ENCODE measurements at regions of chr17 and their contacts with region 1.

Region 1: GRCh38 chr17:60077672-60078519 is 825 bp downstream of the HEATR6 start:
- DNase-seq: peak in 2 of 4 experiments; percentile 44 to 64
- ATAC-seq: peak; percentile 59
- H3K4me3 ChIP-seq: peak overlapping the region; percentile 70
- H3K27ac ChIP-seq: peak overlapping the region; percentile 79
- H3K4me1 ChIP-seq: peaks cover 0 to 25% of the 10 kb centered on the region in 2 experiments; a peak in 2 of 5 replicates
- H3K27me3 ChIP-seq: no peaks in the 10 kb centered on the region
- CTCF ChIP-seq: no peak
- EP300 ChIP-seq: peak; percentile 21; the same call in 1 of the 2 replicates
- POLR2A ChIP-seq: no peak
- RAD21 ChIP-seq: no peak

Region 2: DNA sequence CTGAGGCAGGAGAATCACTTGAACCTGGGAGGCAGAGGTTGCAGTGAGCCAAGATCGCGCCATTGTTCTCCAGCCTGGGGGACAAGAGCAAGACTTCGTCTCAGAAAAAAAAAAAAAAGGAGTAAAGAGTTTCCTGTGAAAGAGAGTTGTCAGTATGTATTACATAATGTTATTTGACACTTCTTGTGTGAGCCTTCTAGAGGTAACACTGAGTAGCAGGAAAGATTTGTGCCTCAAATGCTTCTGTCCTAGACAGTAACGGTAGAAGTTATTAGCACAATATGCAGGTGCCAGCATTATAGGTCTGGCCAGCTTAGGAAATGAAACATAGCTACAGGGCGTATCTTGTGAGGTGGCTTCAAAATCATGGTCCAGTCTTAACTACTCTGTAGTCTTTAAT is 178.8 kb before region 1 on chr17:
- CTCF ChIA-PET with region 1: no interaction called
- POLR2A ChIA-PET with region 1: no interaction called
- in situ Hi-C with region 1: no loop called
- intact Hi-C with region 1: no loop called
- DNase-seq: peak in 2 of 4 experiments; percentile 55 to 66
- ATAC-seq: peak; percentile 89
- H3K4me3 ChIP-seq: no peak overlapping the region
- H3K27ac ChIP-seq: peak overlapping the region; percentile 63; the same call in 1 of the 3 replicates
- H3K4me1 ChIP-seq: peaks cover 7 to 9% of the 10 kb centered on the region in 2 experiments; a peak in 4 of 5 replicates
- H3K27me3 ChIP-seq: no peaks in the 10 kb centered on the region
- CTCF ChIP-seq: peak; percentile 28 to 63 (median 51); a peak in 4 of 6 replicates
- EP300 ChIP-seq: no peak
- POLR2A ChIP-seq: no peak
- RAD21 ChIP-seq: no peak

Region 3: DNA sequence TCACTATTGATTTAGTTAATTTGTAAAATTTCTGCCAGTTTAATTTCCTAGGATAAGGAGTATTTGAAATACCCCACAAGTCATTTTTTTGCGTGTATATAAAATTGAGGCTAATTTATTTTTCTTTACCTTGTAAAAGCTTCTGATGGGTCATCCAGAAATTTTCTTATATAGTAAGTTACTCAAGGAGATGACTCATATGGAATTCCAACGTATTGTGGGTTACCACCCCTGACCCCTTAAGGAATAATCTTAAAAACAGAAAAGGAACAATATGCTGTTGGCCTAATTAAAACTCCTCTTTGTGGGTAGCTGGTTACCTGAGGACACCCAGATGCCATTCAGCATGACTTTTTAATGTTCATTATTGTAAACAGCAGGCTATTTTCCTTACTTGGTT is 12.8 kb before region 1 on chr17:
- CTCF ChIA-PET with region 1: no interaction called
- POLR2A ChIA-PET with region 1: interaction called, 14 read pairs
- in situ Hi-C with region 1: no loop called
- intact Hi-C with region 1: no loop called
- DNase-seq: no peak
- ATAC-seq: no peak
- H3K4me3 ChIP-seq: no peak overlapping the region
- H3K27ac ChIP-seq: no peak overlapping the region
- H3K4me1 ChIP-seq: no peaks in the 10 kb centered on the region
- H3K27me3 ChIP-seq: no peaks in the 10 kb centered on the region
- CTCF ChIP-seq: no peak
- EP300 ChIP-seq: no peak
- POLR2A ChIP-seq: no peak
- RAD21 ChIP-seq: no peak

Region 4: GRCh38 chr17:60087882-60088669 is 10.2 kb after region 1 on chr17:
- CTCF ChIA-PET with region 1: no interaction called
- POLR2A ChIA-PET with region 1: interaction called, 12 read pairs
- in situ Hi-C with region 1: no loop called
- intact Hi-C with region 1: no loop called
- DNase-seq: peak in 2 of 4 experiments; percentile 36 to 41
- ATAC-seq: peak; percentile 84
- H3K4me3 ChIP-seq: no peak overlapping the region
- H3K27ac ChIP-seq: no peak overlapping the region
- H3K4me1 ChIP-seq: peaks cover 8 to 10% of the 10 kb centered on the region in 2 experiments; a peak in 4 of 5 replicates
- H3K27me3 ChIP-seq: no peaks in the 10 kb centered on the region
- CTCF ChIP-seq: no peak
- EP300 ChIP-seq: no peak
- POLR2A ChIP-seq: no peak
- RAD21 ChIP-seq: no peak

Region 5: DNA sequence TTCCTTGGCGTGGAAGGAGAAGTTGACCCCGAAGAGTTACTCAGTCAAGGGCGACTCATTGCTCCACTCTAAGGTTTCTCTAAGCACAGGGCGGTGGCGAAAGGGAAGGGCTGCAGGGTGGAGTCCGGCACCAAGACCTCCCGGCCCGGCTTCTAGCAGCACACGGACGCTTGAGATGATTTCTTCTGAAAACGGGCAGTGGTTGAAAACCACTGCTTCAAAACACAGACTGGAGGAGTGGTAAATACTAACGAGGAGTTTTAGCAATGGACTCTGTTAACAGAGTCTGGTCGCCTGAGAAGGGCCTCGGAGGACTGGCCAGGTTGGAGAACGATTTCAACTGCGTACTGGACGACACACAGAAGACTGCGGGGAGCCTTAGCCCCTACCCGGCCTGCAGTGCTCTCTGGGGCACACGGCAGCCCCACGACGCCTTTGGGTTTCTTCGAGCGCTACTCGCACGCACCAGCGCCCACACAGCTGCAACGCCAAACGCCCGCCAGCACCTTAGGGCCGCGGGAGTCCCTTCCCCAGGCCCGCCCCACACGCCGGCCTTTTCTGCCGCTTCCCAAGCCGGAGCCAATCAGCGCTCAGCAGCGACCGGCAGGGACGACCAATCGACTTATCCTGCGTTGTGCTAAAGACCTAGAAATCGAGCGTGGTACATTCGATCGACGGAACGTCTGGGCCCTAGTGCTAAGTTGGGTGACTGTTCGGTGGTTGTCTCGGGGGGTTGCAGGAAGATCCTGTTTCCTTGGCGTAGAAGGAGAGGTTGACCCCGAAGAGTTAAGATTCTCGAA is 57.5 kb after region 1 on chr17:
- CTCF ChIA-PET with region 1: no interaction called
- POLR2A ChIA-PET with region 1: no interaction called
- in situ Hi-C with region 1: no loop called
- intact Hi-C with region 1: no loop called
- DNase-seq: peak; percentile 94 to 99 (median 98)
- ATAC-seq: peak; percentile 98
- H3K4me3 ChIP-seq: peak overlapping the region; percentile 46
- H3K27ac ChIP-seq: peak overlapping the region; percentile 12
- H3K4me1 ChIP-seq: peaks cover 8 to 24% of the 10 kb centered on the region in 2 experiments; a peak in 3 of 5 replicates
- H3K27me3 ChIP-seq: peaks cover 0 to 19% of the 10 kb centered on the region in 2 experiments; a peak in 3 of 5 replicates
- CTCF ChIP-seq: no peak
- EP300 ChIP-seq: peak; percentile 40; the same call in 1 of the 2 replicates
- POLR2A ChIP-seq: peak; percentile 75
- RAD21 ChIP-seq: no peak

Region 6: DNA sequence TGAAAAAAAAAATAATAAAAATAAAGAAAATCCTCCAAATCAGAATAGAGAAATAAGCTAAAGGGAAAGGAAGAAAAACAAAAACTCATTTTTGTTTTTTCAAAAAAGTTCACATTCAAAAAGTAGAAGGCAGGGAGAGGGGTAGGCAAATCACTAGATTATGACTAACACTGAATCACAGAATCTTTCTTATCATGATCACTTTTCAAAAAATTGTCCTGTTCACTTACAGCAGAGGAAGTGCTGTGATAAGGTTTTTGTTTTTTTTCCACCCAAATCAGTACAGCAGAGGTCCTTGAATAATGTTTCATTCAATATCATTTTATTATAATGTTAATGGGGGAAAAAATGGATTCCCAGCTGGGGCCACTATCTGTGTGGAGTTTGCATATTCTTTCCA is 178.3 kb after region 1 on chr17:
- CTCF ChIA-PET with region 1: no interaction called
- POLR2A ChIA-PET with region 1: no interaction called
- in situ Hi-C with region 1: no loop called
- intact Hi-C with region 1: no loop called
- DNase-seq: no peak
- ATAC-seq: no peak
- H3K4me3 ChIP-seq: no peak overlapping the region
- H3K27ac ChIP-seq: no peak overlapping the region
- H3K4me1 ChIP-seq: no peaks in the 10 kb centered on the region; a peak in 1 of 5 replicates
- H3K27me3 ChIP-seq: no peaks in the 10 kb centered on the region
- CTCF ChIP-seq: no peak
- EP300 ChIP-seq: no peak
- POLR2A ChIP-seq: no peak
- RAD21 ChIP-seq: no peak